B cell (primary cell): ENCODE measurements at regions of chr6 and their contacts with region 1.

Region 1: DNA sequence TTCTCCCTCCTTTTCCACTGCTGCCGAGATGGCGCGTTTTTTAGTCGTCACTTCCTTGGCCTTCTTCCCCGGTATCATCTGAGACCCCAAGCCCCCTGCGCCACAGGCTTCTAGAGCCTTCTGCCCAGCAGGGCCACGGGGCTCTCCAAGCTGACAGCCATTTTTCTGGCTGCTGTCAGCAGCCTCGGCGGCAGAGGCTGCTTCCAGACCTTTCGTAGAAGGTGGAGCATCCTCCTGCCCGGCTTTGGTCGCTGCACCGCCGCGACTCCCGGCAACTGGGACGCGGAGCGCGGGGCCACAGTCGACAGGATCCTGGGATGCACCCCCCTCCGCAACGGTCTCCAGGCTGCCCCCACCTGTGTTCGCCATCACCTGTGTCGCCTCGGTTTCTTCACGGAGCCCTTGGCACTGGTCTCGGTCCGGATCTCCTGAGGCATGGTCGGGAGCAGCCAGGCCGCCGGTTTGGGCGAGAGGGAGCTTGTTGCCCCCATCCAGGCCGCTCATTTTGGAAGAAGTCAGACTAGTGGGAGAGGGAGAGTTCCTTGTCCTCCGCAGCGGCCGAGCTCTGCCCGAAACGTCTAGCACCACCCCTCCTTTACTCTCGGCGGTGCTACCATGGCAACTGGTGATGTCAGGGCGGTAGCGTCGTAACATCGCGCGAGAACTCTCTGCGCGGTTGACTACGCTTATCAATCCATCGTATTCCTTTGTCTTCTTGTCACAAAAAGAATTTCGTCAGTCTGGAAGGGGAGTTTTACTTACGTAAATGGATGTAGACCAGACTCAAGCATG is at the start of gene TSPYL4:
- DNase-seq: peak; percentile 95
- ATAC-seq: peak; percentile 99
- H3K4me3 ChIP-seq: peak within 1 kb of the TSS; percentile 85 to 99 (median 98)
- H3K4me3 Mint-ChIP-seq: no peak within 1 kb of the TSS
- H3K27ac ChIP-seq: peak within 1 kb of the TSS; percentile 94 to 98
- H3K27ac Mint-ChIP-seq: no peak within 1 kb of the TSS
- H3K4me1 ChIP-seq: peaks cover 31 to 36% of the 10 kb centered on the region in 2 donors
- H3K4me1 Mint-ChIP-seq: peaks cover 35% of the 10 kb centered on the region
- H3K27me3 ChIP-seq: no peaks in the 10 kb centered on the region
- H3K27me3 Mint-ChIP-seq: no peaks in the 10 kb centered on the region
- CTCF ChIP-seq: no peak
- total RNA-seq, gene TSPYL4: 20.5 and 20.6 TPM in 2 replicates

Region 2: GRCh38 chr6:116073765-116074419 is 179.8 kb before region 1 on chr6:
- CTCF ChIA-PET with region 1: no interaction called
- POLR2A ChIA-PET with region 1: no interaction called
- intact Hi-C with region 1: no loop called
- DNase-seq: no peak
- ATAC-seq: no peak
- H3K4me3 ChIP-seq: no peak overlapping the region
- H3K4me3 Mint-ChIP-seq: no peak overlapping the region
- H3K27ac ChIP-seq: no peak overlapping the region
- H3K27ac Mint-ChIP-seq: no peak overlapping the region
- H3K4me1 ChIP-seq: peaks cover 0 to 3% of the 10 kb centered on the region in 2 donors
- H3K4me1 Mint-ChIP-seq: no peaks in the 10 kb centered on the region
- H3K27me3 ChIP-seq: peaks cover 0 to 2% (median 0%) of the 10 kb centered on the region in 4 experiments
- H3K27me3 Mint-ChIP-seq: peaks cover 12% of the 10 kb centered on the region
- CTCF ChIP-seq: no peak

Region 3: GRCh38 chr6:116268589-116269293 is 15.0 kb after region 1 on chr6:
- CTCF ChIA-PET with region 1: interaction called, 11 read pairs
- POLR2A ChIA-PET with region 1: no interaction called
- intact Hi-C with region 1: loop called (anchors 2 kb)
- DNase-seq: peak; percentile 71
- ATAC-seq: peak; percentile 77
- H3K4me3 ChIP-seq: no peak overlapping the region
- H3K4me3 Mint-ChIP-seq: no peak overlapping the region
- H3K27ac ChIP-seq: no peak overlapping the region
- H3K27ac Mint-ChIP-seq: no peak overlapping the region
- H3K4me1 ChIP-seq: no peaks in the 10 kb centered on the region
- H3K4me1 Mint-ChIP-seq: peaks cover 22% of the 10 kb centered on the region
- H3K27me3 ChIP-seq: no peaks in the 10 kb centered on the region
- H3K27me3 Mint-ChIP-seq: no peaks in the 10 kb centered on the region
- CTCF ChIP-seq: peak; percentile 75